MCF 10A (cell line): ENCODE measurements at regions of chr2 and their contacts with region 1.

Region 1: DNA sequence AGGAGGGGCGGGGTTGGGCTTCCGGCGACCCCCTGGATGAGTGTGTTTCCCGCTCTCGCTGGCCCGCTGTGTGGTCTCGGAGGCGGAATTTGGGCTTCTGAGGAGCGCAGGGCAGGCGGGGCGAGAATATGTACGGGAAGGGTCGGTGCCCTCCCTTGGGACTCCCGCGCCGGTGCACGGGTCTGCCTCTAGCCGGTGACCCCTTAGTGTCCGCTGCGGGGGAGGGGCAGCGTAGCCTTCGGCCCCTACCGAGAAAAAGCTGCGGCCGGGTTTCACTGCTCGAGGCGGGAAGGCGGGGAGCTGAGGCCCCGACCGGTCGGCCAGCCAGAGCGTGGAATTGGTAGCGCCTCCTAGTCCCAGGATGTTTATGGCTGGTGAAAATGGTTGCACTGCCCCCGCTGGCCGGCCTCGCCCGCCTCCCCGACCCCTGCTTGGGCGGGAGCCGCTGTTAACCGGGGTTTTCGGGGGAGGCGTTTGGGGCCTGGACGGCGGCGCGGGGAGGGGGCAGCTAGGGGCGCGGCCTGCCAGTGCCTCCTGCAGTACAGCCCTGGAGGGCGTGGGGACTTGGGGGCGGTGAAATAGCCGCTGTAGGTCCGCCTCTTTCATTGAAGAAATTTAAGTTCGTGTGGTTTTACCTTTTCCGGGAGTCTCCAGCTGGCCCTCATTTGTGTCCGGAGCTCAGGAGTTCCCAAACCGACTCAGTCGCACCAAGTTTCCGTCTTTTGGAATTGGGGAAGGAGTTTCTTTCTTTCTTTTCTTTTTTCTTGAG is at the start of gene UGP2:
- DNase-seq: peak; percentile 92
- H3K4me3 Mint-ChIP-seq: peak within 1 kb of the TSS; percentile 93
- H3K27ac Mint-ChIP-seq: peak within 1 kb of the TSS; percentile 96
- H3K4me1 Mint-ChIP-seq: peaks cover 13% of the 10 kb centered on the region
- H3K27me3 Mint-ChIP-seq: no peaks in the 10 kb centered on the region
- CTCF ChIP-seq: no peak
- total RNA-seq, gene UGP2: 77.3 and 78.4 TPM in 2 replicates

Region 2: GRCh38 chr2:63692002-63692606 is 149.3 kb before region 1 on chr2:
- CTCF ChIA-PET with region 1: interaction called, 4 read pairs
- POLR2A ChIA-PET with region 1: interaction called, 229 read pairs
- intact Hi-C with region 1: no loop called
- DNase-seq: peak; percentile 48
- H3K4me3 Mint-ChIP-seq: no peak overlapping the region
- H3K27ac Mint-ChIP-seq: no peak overlapping the region
- H3K4me1 Mint-ChIP-seq: peaks cover 5% of the 10 kb centered on the region
- H3K27me3 Mint-ChIP-seq: no peaks in the 10 kb centered on the region
- CTCF ChIP-seq: peak; percentile 63

Region 3: DNA sequence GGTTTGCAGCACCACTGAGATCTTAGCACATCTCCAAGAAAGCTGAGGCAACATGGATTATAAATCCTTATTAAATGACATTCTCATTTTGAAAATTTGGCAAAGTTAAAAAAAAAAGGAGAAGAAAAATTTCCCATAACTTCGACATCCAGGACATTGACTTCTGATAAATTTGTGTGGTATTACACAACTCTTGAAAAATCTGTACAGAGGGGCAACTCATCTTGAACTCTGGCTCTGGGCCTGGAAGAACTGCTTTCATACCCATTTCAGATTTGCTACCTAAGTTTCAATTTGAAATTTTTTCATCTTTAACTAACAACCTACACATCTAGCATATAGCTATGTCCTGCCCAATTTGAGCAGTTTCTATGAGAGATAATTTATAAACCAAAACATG is 117.7 kb before region 1 on chr2:
- CTCF ChIA-PET with region 1: no interaction called
- POLR2A ChIA-PET with region 1: interaction called, 10 read pairs
- intact Hi-C with region 1: no loop called
- DNase-seq: no peak
- H3K4me3 Mint-ChIP-seq: no peak overlapping the region
- H3K27ac Mint-ChIP-seq: no peak overlapping the region
- H3K4me1 Mint-ChIP-seq: peaks cover 6% of the 10 kb centered on the region
- H3K27me3 Mint-ChIP-seq: no peaks in the 10 kb centered on the region
- CTCF ChIP-seq: no peak

Region 4: GRCh38 chr2:63763391-63763941 is 78.0 kb before region 1 on chr2:
- CTCF ChIA-PET with region 1: no interaction called
- POLR2A ChIA-PET with region 1: interaction called, 14 read pairs
- intact Hi-C with region 1: no loop called
- DNase-seq: peak; percentile 30
- H3K4me3 Mint-ChIP-seq: peak overlapping the region; percentile 10
- H3K27ac Mint-ChIP-seq: no peak overlapping the region
- H3K4me1 Mint-ChIP-seq: peaks cover 17% of the 10 kb centered on the region
- H3K27me3 Mint-ChIP-seq: no peaks in the 10 kb centered on the region
- CTCF ChIP-seq: no peak

Region 5: DNA sequence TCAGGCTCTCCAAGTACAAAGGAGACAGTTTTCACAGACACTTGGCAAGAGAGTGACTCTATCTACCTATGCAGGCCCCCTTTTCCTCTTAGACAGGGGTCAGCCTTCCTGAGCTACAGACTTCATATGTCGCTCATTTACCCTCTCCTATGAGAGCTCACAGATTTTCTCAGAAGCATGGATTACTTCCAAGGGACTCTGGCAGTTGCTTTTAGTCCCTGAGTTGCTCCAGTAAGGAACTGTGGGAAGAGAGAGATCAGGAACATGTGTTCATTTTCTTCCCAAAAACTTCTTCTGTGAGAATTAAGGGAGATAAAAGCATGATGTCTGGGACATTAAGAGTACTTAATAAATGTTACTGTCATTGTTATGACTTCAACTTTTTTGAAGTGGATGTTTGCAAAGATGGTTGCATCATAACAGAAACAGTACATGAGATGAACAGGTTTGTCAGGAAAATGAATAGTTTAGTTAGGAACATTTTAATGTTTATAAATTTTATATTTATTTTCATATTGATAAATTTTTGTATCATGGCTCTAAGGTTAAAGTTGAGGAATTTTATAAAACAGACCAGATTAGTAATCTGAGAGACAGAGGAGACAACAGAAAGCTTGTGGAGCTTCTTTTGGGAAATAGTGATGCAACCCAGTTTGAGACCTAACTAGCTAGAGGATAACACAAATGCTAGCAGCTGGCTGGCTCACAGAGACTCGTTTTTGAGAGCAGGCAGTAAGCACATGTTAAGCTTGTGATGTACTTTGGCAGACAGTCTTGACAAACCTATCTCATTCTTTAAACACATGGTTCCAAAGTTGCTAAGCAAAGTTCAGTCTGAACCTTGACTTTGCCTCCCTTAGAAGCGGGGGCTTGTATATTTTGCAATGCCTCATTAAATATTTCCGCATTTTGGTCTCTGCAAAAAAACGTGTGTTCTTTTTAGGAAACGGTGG is 21.4 kb before region 1 on chr2:
- CTCF ChIA-PET with region 1: no interaction called
- POLR2A ChIA-PET with region 1: interaction called, 60 read pairs
- intact Hi-C with region 1: no loop called
- DNase-seq: no peak
- H3K4me3 Mint-ChIP-seq: no peak overlapping the region
- H3K27ac Mint-ChIP-seq: no peak overlapping the region
- H3K4me1 Mint-ChIP-seq: peaks cover 11% of the 10 kb centered on the region
- H3K27me3 Mint-ChIP-seq: no peaks in the 10 kb centered on the region
- CTCF ChIP-seq: no peak

Region 6: DNA sequence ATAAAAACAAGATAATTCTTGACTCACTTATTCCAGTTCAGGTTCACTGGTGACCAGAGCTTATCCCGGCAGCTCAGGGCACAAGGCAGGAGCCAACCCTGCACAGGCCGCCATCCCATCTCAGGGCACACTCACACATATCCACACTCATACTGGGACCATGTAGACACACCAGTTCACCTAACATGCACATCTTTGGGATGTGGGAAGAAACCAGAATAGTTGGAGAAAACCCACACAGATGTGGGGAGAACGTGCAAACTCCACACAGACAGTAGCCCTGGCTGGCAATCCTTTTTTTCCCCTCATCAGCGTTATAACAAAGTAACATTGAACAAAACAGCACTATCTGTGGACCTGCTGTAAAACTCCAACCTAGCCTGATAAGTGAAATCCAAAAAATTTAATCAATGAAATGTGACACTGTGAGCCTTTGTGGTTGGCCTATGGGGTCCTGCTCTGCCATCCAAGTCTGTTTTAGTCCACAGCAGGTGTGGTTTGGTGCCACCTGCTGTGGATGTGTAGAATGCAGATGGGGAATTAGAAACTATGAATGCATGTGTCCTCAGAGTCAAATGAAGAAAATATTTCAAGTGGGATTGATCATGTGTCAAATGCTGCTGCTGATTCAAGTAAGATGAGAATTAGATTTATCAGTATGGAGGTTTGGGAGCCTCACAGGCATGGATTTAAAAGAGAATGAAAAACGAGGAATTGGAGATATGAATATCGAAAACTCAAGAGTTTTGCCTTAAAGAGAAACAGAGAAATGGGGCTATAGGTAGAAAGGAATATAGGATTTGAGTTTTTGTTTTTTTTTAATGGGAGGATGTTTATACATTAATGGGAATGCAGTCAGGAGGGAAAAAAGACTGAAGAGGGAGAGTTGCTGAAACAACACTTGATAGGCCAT is 47.3 kb after region 1 on chr2:
- CTCF ChIA-PET with region 1: interaction called, 4 read pairs
- POLR2A ChIA-PET with region 1: interaction called, 3 read pairs
- intact Hi-C with region 1: loop called (anchors 1 kb)
- DNase-seq: peak; percentile 67
- H3K4me3 Mint-ChIP-seq: no peak overlapping the region
- H3K27ac Mint-ChIP-seq: peak overlapping the region; percentile 17
- H3K4me1 Mint-ChIP-seq: peaks cover 5% of the 10 kb centered on the region
- H3K27me3 Mint-ChIP-seq: no peaks in the 10 kb centered on the region
- CTCF ChIP-seq: peak; percentile 71